ENCODE measurements at regions of chr3 and their contacts with region 1.

Region 1: GRCh38 chr3:133573054-133573628 is 345 bp upstream of the CDV3 start:
- DNase-seq: peak; percentile 100
- H3K4me3 ChIP-seq: peak overlapping the region; percentile 63 to 84
- H3K27ac ChIP-seq: peak overlapping the region; percentile 92
- H3K4me1 ChIP-seq: peaks cover 6% of the 10 kb centered on the region
- H3K27me3 ChIP-seq: no peaks in the 10 kb centered on the region
- CTCF ChIP-seq: peak in 2 of 4 experiments; percentile 34 to 46
- POLR2A ChIP-seq: peak; percentile 62

Region 2: DNA sequence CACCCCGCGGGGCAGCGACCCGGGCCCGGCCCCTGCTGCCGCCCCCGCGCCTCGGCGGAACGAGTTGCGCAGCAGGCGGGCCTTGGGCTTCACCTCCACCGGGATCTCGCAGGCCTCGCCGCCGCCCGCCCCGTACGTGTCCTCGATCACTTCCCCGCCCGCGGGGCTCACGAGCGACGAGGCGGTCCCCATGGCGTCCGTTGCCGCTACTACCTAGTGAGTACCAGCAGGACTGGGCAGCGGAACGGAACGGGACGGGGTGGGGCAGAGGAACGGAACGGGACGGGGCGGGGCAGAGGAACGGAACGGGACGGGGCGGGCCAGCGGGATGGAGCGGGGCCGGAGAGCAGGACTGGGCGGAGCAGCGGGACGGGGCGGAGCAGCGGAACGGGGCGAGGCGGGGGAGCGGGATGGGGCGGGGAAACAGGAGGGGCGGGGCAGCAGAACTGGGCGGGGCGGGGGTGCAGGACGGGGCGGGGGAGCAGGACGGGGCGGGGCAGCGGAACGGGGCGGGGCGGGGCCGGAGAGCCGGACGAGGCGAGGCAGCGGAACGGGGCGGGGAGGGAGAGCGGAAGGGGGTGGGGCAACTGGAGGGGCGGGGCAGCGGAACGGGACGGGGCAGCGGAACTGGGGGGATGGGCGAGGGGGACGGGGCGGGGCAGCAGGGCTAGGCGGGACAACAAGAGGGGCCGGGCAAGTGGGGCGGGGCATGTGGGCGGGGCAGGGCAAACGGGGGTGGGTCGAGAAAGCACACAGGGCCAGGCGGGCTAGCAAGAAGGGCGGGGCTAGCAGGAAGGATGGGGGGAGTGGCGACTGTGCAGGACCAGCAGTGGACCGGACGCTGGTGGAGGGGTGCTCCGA is 850.7 kb before region 1 on chr3 and contains the start of gene NPHP3:
- intact Hi-C with region 1: loop called (anchors 2 kb)
- DNase-seq: peak; percentile 97
- H3K4me3 ChIP-seq: peak within 1 kb of the TSS; percentile 81 to 96
- H3K27ac ChIP-seq: peak within 1 kb of the TSS; percentile 90 to 94
- H3K4me1 ChIP-seq: peaks cover 10% of the 10 kb centered on the region
- H3K27me3 ChIP-seq: no peaks in the 10 kb centered on the region
- CTCF ChIP-seq: peak in 2 of 4 experiments; percentile 16 to 40
- POLR2A ChIP-seq: peak; percentile 96
- total RNA-seq, gene NPHP3: 15.1 to 41.1 TPM

Region 3: GRCh38 chr3:133475245-133476010 is 97.7 kb before region 1 on chr3:
- intact Hi-C with region 1: loop called (anchors 10 kb)
- DNase-seq: no peak
- H3K4me3 ChIP-seq: no peak overlapping the region
- H3K27ac ChIP-seq: no peak overlapping the region
- H3K4me1 ChIP-seq: no peaks in the 10 kb centered on the region
- H3K27me3 ChIP-seq: no peaks in the 10 kb centered on the region
- CTCF ChIP-seq: no peak
- POLR2A ChIP-seq: no peak

Region 4: DNA sequence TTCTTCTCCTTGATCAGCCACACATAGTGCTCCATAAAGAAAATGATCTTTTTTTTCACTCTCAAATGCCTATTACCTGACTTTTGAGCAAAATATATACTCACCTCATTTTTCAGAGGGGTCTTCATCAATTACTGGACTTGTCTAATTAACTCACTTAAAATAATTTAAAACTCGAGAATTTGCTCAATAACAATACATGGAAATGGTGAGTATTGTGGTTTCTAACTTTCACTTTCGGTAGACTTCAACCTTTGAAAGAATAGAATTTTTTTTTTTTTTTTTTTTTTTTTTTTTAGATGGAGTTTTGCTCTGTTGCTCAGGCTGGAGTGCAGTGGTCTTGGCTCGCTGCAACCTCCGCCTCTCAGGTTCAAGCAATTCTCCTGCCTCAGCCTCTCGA is 1204.2 kb after region 1 on chr3:
- intact Hi-C with region 1: no loop called
- DNase-seq: no peak
- H3K4me3 ChIP-seq: no peak overlapping the region
- H3K27ac ChIP-seq: no peak overlapping the region
- H3K4me1 ChIP-seq: no peaks in the 10 kb centered on the region
- H3K27me3 ChIP-seq: no peaks in the 10 kb centered on the region
- CTCF ChIP-seq: no peak
- POLR2A ChIP-seq: no peak

Measured in prostate gland (tissue), 2 donors.